ENCODE measurements at regions of chr1 and their contacts with region 1.

Region 1: GRCh38 chr1:229999004-229999670 is 67.9 kb upstream of the GALNT2 start:
- DNase-seq: no peak

Region 2: DNA sequence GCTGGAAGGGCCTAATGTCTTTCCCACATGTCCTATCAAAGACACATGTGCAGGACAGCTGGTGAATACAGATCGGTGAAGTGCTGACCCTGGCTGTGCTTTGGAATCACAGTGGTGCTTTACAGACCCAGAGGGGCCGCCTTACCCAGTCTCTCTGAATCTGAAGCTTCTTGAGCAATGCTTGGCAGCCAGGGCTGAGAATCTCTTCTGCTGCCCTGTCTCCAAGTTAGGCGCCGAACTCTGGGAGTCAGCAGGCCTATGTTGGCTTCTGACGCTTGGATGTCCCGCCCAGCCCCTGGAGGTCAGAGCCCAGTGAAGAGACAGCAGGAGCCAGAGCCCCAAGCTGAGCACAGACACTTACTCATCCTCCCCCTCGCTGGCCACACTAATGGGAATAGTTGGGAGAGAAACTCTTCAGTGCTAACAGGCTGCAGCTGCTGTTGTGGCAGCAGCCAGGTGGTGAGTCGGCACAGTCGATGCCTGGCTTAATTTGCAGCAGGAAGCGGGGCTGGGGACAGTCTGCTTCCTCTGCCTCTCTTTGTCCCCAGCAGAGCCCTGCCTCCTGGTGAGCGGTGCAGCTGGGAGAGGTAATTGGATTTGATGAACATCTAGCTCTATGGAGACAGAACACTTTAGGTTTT is 305.0 kb before region 1 on chr1:
- intact Hi-C with region 1: loop called (anchors 5 kb)
- DNase-seq: peak; percentile 81

Measured in cardiac septum (tissue), 1 donor.